Posterior cingulate gyrus (tissue), 11 donors: ENCODE measurements at regions of chr2 and their contacts with region 1.

Region 1: DNA sequence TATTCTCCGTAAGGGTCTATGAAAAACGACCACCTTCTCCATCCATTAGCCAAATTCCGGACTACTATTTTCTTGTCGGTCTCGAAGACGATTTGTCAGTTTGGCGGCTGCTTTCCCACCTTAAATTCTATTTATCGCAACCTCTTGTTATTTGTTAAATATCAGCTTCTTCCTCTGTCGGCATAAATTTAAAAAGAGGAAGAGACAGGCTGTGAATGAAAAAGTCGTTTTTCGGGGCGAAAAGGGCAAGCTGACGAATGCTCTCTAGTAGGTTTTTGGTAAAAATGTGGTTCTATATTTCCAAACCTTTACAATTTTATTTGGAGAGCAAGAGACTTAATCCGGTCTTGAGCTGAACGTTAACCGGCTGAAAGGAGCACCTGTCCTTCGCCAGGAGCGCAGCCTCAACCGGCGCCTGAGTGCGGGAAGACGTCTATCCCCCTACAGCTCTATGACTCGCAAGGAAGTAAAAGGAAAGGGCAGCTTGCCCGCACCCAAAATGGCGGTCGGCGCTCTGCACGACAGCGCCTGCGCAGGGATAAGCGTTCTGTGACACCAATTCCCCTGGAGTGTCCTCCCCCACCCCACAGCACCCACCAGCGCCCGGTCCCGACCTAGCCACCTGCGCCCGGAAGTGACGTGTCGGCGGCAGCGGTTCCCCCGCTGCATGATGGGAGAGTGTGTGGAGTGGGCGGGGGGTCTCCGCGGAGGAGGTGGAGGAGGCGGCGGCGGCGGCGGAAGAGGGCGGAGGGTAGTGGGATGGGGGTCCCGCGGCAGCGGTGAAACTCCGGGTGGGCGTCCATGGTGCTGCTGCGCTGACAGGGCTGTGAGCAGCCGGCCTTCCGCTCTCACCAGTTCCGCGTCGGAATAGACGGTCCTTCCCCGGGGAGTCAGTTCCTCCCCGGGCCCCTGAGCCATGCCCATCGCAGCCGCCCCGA is at the start of gene AFTPH:
- DNase-seq: peak; percentile 97 to 100 (median 98)

Region 2: GRCh38 chr2:64562148-64562784 is 38.3 kb after region 1 on chr2:
- intact Hi-C with region 1: loop called (anchors 5 kb)
- DNase-seq: no peak

Region 3: DNA sequence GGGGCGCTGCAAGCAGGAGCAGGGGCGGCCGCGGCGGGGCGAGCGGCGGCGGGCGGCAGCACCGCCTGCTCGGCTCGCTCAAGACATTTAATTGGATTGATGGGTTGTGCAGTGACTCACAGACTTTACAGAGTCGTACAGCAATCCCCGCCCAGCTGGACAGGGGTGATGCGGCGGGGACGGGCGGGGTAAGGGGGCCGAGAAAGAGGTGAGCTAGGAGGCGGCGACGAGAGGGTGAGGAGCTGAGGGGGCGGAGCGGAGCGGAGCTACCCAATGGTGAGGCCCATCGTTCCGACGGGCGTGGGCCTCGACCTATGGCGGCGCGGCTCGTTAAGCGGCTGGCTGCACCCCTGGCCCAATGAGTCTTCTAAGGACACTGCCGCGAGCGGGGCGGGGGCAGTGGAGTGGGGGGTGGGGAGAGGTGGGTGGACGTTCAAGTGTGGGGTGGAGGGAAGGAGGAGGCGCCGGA is 226.9 kb after region 1 on chr2:
- intact Hi-C with region 1: loop called (anchors 5 kb)
- DNase-seq: peak; percentile 95 to 100 (median 99)

Region 4: GRCh38 chr2:64865073-64865830 is 341.3 kb after region 1 on chr2:
- intact Hi-C with region 1: loop called (anchors 2 kb)
- DNase-seq: peak; percentile 32 to 93 (median 60)